ENCODE measurements at regions of chr14 and their contacts with region 1.

Region 1: DNA sequence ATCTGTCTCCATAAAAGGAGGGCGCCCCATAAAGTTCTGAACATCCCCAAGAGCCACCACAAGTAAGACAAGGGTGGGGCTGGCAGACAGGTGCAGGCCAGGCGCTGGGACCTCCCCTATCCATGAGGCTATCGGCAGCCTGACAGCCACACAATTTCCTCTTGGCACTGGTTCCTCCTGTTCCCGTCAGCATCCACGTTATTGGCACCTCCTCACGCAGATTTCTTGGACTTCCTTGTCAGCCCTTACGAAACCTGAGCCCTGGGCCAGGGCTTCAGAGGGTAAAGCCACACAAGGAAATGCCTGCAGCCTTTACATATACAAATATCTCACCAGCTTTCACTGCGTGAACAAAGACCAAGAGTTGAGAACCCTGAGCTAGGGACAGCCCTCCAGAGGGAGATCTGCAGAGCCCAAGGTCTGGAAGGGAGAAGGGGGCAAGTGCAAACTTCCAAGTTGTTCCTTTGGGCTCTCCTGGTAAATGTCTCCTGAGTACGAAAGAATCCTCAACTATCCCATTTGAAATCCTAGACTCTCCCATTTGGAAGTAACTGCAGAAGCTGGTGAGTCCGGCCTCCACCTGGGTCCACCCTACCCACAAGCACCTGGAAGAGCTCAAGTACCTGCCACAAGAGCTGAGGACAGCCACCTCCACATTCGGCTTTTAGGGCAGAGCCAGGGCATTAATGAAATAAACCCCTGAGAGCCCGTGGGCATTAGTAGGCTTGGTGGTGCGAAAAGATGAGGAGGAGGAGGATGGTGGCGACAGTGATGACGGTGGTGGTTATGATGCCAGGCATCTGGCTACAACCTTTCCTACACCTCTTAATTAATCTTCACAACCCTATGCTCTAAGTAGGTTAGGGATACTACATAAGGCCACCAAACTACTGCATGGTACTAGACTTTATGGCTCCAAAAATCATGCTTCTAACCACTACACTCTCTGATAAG is 5.5 kb upstream of the TC2N start:
- DNase-seq: peak; percentile 69 to 78 (median 72)
- H3K4me3 ChIP-seq: peak overlapping the region; percentile 45 to 58
- H3K4me3 Mint-ChIP-seq: peak overlapping the region; percentile 80 to 93 (median 88)
- H3K27ac ChIP-seq: peak overlapping the region; percentile 79
- H3K27ac Mint-ChIP-seq: peak overlapping the region; percentile 93 to 100 (median 97)
- H3K4me1 ChIP-seq: peaks cover 96% of the 10 kb centered on the region
- H3K4me1 Mint-ChIP-seq: peaks cover 62 to 100% (median 89%) of the 10 kb centered on the region in 4 donors
- H3K27me3 ChIP-seq: no peaks in the 10 kb centered on the region
- H3K27me3 Mint-ChIP-seq: no peaks in the 10 kb centered on the region

Region 2: GRCh38 chr14:90383075-90383730 is 1489.6 kb before region 1 on chr14:
- CTCF ChIA-PET with region 1: no interaction called
- POLR2A ChIA-PET with region 1: interaction called, 6 read pairs
- intact Hi-C with region 1: loop called (anchors 10 kb)
- DNase-seq: peak; percentile 96 to 98 (median 97)
- H3K4me3 ChIP-seq: peak overlapping the region; percentile 86 to 95
- H3K4me3 Mint-ChIP-seq: no peak overlapping the region
- H3K27ac ChIP-seq: peak overlapping the region; percentile 93
- H3K27ac Mint-ChIP-seq: no peak overlapping the region
- H3K4me1 ChIP-seq: peaks cover 31% of the 10 kb centered on the region
- H3K4me1 Mint-ChIP-seq: peaks cover 4 to 18% (median 9%) of the 10 kb centered on the region in 4 donors
- H3K27me3 ChIP-seq: no peaks in the 10 kb centered on the region
- H3K27me3 Mint-ChIP-seq: no peaks in the 10 kb centered on the region

Region 3: DNA sequence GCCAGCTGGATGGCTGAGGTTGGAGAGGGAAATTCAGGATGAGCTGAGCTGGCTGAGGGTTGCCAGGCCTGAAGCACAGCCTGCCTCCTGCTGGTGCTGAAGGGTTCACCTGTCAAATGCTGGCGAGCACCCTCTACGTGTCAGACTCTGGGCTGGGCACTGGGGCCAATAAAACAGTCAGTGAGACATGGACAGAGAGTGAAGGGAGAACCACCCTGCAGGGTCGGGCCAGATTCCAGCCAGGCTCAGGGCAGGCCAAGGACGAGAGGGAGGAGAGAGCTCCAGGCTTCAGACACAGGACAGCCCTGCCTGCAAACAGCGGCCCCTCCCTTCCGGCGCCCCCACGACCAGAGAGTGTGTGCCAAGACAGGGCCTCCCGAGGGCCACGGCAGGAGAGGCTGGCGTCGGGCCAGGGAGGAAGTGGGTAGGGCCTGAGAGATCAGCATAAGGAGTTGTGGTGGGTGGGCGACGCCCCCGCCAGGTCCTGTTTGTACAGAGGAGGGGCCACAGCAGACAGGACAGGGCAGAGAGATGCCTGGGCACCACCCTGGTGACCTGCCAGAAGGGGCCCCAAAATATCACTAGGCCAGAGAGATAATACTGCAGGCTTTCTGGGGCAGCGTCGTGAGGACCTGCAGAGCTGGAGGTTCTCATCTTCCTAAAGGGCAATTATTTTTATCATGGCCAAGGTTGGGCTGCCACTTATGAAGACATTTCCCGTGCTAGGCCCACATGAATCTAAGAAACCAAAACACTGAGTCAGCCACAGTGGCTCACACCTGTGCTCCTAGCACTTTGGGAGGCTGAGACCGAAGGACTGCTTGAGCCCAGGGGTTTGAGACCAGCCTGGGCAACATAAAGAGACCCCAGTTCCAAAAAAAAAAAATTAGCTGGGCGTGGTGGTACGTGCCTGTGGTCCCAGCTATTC is 555.1 kb before region 1 on chr14:
- CTCF ChIA-PET with region 1: no interaction called
- POLR2A ChIA-PET with region 1: no interaction called
- intact Hi-C with region 1: loop called (anchors 10 kb)
- DNase-seq: peak; percentile 84 to 87 (median 85)
- H3K4me3 ChIP-seq: peak overlapping the region; percentile 17 to 29
- H3K4me3 Mint-ChIP-seq: peak overlapping the region; percentile 76 to 90 (median 84)
- H3K27ac ChIP-seq: peak overlapping the region; percentile 75
- H3K27ac Mint-ChIP-seq: peak overlapping the region; percentile 98 to 100 (median 99)
- H3K4me1 ChIP-seq: peaks cover 98% of the 10 kb centered on the region
- H3K4me1 Mint-ChIP-seq: peaks cover 45 to 88% (median 68%) of the 10 kb centered on the region in 4 donors
- H3K27me3 ChIP-seq: no peaks in the 10 kb centered on the region
- H3K27me3 Mint-ChIP-seq: no peaks in the 10 kb centered on the region

Region 4: DNA sequence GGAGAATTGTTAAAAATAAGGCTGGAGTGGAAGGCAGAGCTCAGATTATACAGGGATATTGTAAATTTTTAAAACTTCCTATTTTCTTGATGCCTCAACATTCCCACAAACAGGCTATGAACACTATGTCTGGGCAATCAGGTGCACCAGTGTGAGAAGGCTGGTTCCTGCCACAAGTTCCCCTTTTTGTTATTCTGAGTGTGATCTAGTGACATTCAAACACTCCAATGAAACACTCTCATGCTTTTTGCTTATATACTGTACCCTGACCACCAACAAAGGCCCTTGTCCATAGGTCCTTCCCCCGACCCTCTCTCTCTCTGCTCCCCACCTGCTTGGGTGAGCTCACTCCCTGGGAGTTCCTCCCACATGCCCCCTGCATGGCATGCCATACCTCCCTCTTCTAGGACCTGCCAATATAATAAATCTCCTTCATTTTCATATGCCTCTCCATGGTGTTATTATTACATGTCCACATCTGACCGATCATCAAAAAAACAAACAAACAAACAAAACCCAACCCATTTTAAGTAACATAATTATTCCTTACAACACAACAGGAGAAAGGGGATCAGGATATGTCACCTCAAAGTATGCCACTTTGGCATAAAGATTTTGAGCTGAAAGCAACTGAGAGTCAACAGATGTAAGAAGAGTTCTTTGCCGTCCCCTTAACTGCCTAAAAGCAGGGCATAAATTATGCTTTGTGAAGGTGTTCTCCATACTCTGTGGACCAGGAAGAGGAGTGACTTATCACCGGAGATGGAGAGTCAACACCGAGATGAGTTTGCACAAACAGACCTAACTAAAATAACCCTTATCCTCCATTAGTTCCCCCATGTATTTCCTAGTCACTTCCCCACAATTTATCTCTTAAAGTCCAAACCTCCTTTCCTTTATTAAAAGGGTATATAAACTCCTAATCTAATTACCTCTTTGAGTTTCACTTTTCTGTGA is 98.4 kb before region 1 on chr14:
- CTCF ChIA-PET with region 1: no interaction called
- POLR2A ChIA-PET with region 1: no interaction called
- intact Hi-C with region 1: no loop called
- DNase-seq: no peak
- H3K4me3 ChIP-seq: no peak overlapping the region
- H3K4me3 Mint-ChIP-seq: no peak overlapping the region
- H3K27ac ChIP-seq: no peak overlapping the region
- H3K27ac Mint-ChIP-seq: peak overlapping the region in 6 of 7 donors; percentile 36 to 85 (median 46)
- H3K4me1 ChIP-seq: no peaks in the 10 kb centered on the region
- H3K4me1 Mint-ChIP-seq: peaks cover 16 to 20% (median 16%) of the 10 kb centered on the region in 4 donors
- H3K27me3 ChIP-seq: no peaks in the 10 kb centered on the region
- H3K27me3 Mint-ChIP-seq: no peaks in the 10 kb centered on the region

Region 5: GRCh38 chr14:91836119-91836881 is 36.5 kb before region 1 on chr14:
- CTCF ChIA-PET with region 1: interaction called, 3 read pairs
- POLR2A ChIA-PET with region 1: interaction called, 93 read pairs
- intact Hi-C with region 1: loop called (anchors 1 kb)
- DNase-seq: peak; percentile 80 to 90 (median 83)
- H3K4me3 ChIP-seq: peak overlapping the region; percentile 34 to 63
- H3K4me3 Mint-ChIP-seq: peak overlapping the region; percentile 84 to 92 (median 88)
- H3K27ac ChIP-seq: peak overlapping the region; percentile 68
- H3K27ac Mint-ChIP-seq: peak overlapping the region; percentile 81 to 95 (median 91)
- H3K4me1 ChIP-seq: peaks cover 72% of the 10 kb centered on the region
- H3K4me1 Mint-ChIP-seq: peaks cover 64 to 94% (median 77%) of the 10 kb centered on the region in 4 donors
- H3K27me3 ChIP-seq: no peaks in the 10 kb centered on the region
- H3K27me3 Mint-ChIP-seq: no peaks in the 10 kb centered on the region

Region 6: GRCh38 chr14:91858215-91858905 is 14.4 kb before region 1 on chr14:
- CTCF ChIA-PET with region 1: interaction called, 11 read pairs
- POLR2A ChIA-PET with region 1: interaction called, 193 read pairs
- intact Hi-C with region 1: loop called (anchors 1 kb)
- DNase-seq: peak in 1 of 5 donors; percentile 65
- H3K4me3 ChIP-seq: no peak overlapping the region
- H3K4me3 Mint-ChIP-seq: peak overlapping the region; percentile 7 to 87 (median 54)
- H3K27ac ChIP-seq: no peak overlapping the region
- H3K27ac Mint-ChIP-seq: peak overlapping the region; percentile 77 to 95 (median 89)
- H3K4me1 ChIP-seq: peaks cover 96% of the 10 kb centered on the region
- H3K4me1 Mint-ChIP-seq: peaks cover 68 to 100% (median 91%) of the 10 kb centered on the region in 4 donors
- H3K27me3 ChIP-seq: no peaks in the 10 kb centered on the region
- H3K27me3 Mint-ChIP-seq: no peaks in the 10 kb centered on the region

Region 7: GRCh38 chr14:91893007-91893406 is 20.2 kb after region 1 on chr14:
- CTCF ChIA-PET with region 1: interaction called, 46 read pairs
- POLR2A ChIA-PET with region 1: interaction called, 86 read pairs
- intact Hi-C with region 1: loop called (anchors 2 kb)
- DNase-seq: peak in 4 of 5 donors; percentile 30 to 48 (median 41)
- H3K4me3 ChIP-seq: no peak overlapping the region
- H3K4me3 Mint-ChIP-seq: peak overlapping the region in 2 of 8 donors; percentile 43 to 53
- H3K27ac ChIP-seq: no peak overlapping the region
- H3K27ac Mint-ChIP-seq: peak overlapping the region in 3 of 7 donors; percentile 9 to 38 (median 36)
- H3K4me1 ChIP-seq: peaks cover 54% of the 10 kb centered on the region
- H3K4me1 Mint-ChIP-seq: peaks cover 29 to 71% (median 48%) of the 10 kb centered on the region in 4 donors
- H3K27me3 ChIP-seq: no peaks in the 10 kb centered on the region
- H3K27me3 Mint-ChIP-seq: no peaks in the 10 kb centered on the region